IMR-90 (cell line): ENCODE measurements at regions of chr6 and their contacts with region 1.

Region 1: GRCh38 chr6:17673543-17674254 is 33.0 kb downstream of the NUP153 start:
- DNase-seq: no peak
- ATAC-seq: 0 out of 2 replicates have a peak, but pooled peaks have one; percentile 24
- H3K4me3 ChIP-seq: no peak overlapping the region
- H3K27ac ChIP-seq: no peak overlapping the region
- H3K4me1 ChIP-seq: no peaks in the 10 kb centered on the region
- H3K27me3 ChIP-seq: no peaks in the 10 kb centered on the region
- CTCF ChIP-seq: no peak
- POLR2A ChIP-seq: no peak
- RAD21 ChIP-seq: no peak

Region 2: GRCh38 chr6:17392978-17393891 is 280.5 kb before region 1 on chr6 and contains the start of gene CAP2:
- CTCF ChIA-PET with region 1: no interaction called
- POLR2A ChIA-PET with region 1: no interaction called
- dilution Hi-C with region 1: no loop called
- in situ Hi-C with region 1: no loop called
- intact Hi-C with region 1: no loop called
- DNase-seq: peak; percentile 59
- ATAC-seq: peak; percentile 91
- H3K4me3 ChIP-seq: peak within 1 kb of the TSS; percentile 53
- H3K27ac ChIP-seq: peak within 1 kb of the TSS; percentile 94
- H3K4me1 ChIP-seq: peaks cover 6% of the 10 kb centered on the region; the same call in 1 of the 2 replicates
- H3K27me3 ChIP-seq: no peaks in the 10 kb centered on the region
- CTCF ChIP-seq: no peak
- POLR2A ChIP-seq: peak; percentile 39; the same call in 1 of the 2 replicates
- RAD21 ChIP-seq: peak; percentile 4; the same call in 1 of the 2 replicates
- total RNA-seq, gene CAP2: 14.5 and 16.1 TPM in 2 replicates

Region 3: DNA sequence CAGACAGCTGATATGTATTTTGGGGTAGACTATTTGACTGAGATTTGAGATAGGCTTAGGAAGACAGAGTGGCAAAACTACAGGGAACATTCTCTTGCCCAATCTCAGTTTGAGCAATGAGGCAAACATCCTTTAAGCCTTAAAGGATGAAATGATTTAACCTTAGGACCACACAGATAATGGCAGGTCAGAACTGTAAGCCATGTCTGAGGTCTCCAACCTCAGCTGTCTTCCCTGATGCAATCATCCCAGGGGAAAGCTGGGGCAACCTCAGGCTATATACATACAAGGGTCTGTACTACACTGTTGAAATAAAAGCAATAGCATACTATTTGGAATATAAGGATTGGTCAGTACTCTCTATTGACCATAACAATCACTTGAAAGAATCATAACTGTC is 116.8 kb after region 1 on chr6:
- CTCF ChIA-PET with region 1: no interaction called
- POLR2A ChIA-PET with region 1: no interaction called
- dilution Hi-C with region 1: loop called (anchors 10 kb)
- in situ Hi-C with region 1: no loop called
- intact Hi-C with region 1: no loop called
- DNase-seq: no peak
- ATAC-seq: 0 out of 2 replicates have a peak, but pooled peaks have one; percentile 24
- H3K4me3 ChIP-seq: no peak overlapping the region
- H3K27ac ChIP-seq: no peak overlapping the region
- H3K4me1 ChIP-seq: no peaks in the 10 kb centered on the region
- H3K27me3 ChIP-seq: no peaks in the 10 kb centered on the region
- CTCF ChIP-seq: no peak
- POLR2A ChIP-seq: no peak
- RAD21 ChIP-seq: no peak

Region 4: DNA sequence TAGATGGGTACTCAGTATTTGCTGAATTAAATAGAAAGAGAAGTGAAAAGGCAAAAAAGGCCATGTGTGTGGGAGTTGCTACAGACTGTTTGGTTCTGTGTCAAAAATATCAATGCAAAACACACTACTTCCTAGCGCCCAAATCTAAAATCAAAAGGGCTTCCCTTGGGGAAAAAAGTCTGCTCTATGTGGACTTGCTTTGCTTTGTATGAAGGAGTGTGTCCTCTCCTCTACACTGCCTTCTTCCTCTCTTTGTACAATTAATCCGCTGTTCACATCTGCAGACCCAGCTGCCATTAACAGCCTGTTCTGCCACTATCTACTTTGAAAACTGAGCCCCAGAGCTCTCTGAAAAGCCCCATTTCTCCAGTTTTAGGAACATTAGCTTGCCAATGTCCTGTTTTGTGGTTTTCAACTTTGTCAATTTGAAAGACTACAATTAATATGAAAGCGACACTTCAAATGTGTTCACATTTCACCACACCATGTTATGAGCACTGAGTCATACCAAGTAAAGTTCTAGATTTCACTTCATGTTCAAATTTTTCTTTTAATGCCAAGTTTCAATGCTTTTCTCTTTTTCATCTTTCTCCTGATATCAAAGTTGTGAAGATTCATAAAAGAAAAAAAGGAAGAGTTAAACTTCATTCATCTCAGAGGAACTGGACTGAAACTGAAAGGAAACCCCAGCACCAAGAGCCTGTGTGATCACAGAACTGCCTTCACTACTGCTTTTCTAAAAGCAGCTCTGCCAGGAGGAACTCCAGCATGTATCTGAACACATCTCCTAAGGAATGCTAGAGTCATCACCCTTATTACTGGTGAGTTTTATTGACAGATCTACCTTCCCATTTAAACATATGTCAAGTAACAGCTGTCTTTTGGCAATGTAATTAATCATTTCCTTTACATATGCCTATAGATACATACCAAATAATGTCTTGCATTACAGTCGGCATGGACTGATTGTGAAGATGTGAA is 211.1 kb after region 1 on chr6:
- CTCF ChIA-PET with region 1: no interaction called
- POLR2A ChIA-PET with region 1: no interaction called
- dilution Hi-C with region 1: no loop called
- in situ Hi-C with region 1: no loop called
- intact Hi-C with region 1: no loop called
- DNase-seq: peak; percentile 19
- ATAC-seq: peak; percentile 61
- H3K4me3 ChIP-seq: no peak overlapping the region
- H3K27ac ChIP-seq: no peak overlapping the region
- H3K4me1 ChIP-seq: peaks cover 6% of the 10 kb centered on the region
- H3K27me3 ChIP-seq: no peaks in the 10 kb centered on the region
- CTCF ChIP-seq: no peak
- POLR2A ChIP-seq: no peak
- RAD21 ChIP-seq: no peak